ENCODE measurements at regions of chr6 and their contacts with region 1.

Region 1: GRCh38 chr6:147285087-147285855 is 81.1 kb downstream of the STXBP5 start:
- DNase-seq: no peak
- H3K4me3 ChIP-seq: no peak overlapping the region
- H3K27ac ChIP-seq: no peak overlapping the region
- H3K4me1 ChIP-seq: peaks cover 11% of the 10 kb centered on the region
- H3K27me3 ChIP-seq: no peaks in the 10 kb centered on the region
- CTCF ChIP-seq: peak; percentile 57

Region 2: GRCh38 chr6:147213772-147214171 is 71.5 kb before region 1 on chr6:
- CTCF ChIA-PET with region 1: no interaction called
- POLR2A ChIA-PET with region 1: interaction called, 18 read pairs
- intact Hi-C with region 1: no loop called
- DNase-seq: no peak
- H3K4me3 ChIP-seq: no peak overlapping the region
- H3K27ac ChIP-seq: no peak overlapping the region
- H3K4me1 ChIP-seq: no peaks in the 10 kb centered on the region
- H3K27me3 ChIP-seq: no peaks in the 10 kb centered on the region
- CTCF ChIP-seq: no peak

Measured in PC-9 (cell line).